Activated B cell treated with CpG ODN at 0.5 μM for 24 hours (primary cell): ENCODE measurements at regions of chr9 and their contacts with region 1.

Region 1: GRCh38 chr9:35829084-35829763 is at the start of gene TMEM8B:
- DNase-seq: peak; percentile 89
- ATAC-seq: peak; percentile 92
- H3K4me3 Mint-ChIP-seq: peak within 1 kb of the TSS; percentile 95
- H3K27ac Mint-ChIP-seq: peak within 1 kb of the TSS; percentile 86
- H3K4me1 Mint-ChIP-seq: peaks cover 34% of the 10 kb centered on the region
- H3K27me3 Mint-ChIP-seq: no peaks in the 10 kb centered on the region
- CTCF ChIP-seq: no peak
- total RNA-seq, gene TMEM8B: 5.0 and 8.0 TPM in 2 replicates

Region 2: DNA sequence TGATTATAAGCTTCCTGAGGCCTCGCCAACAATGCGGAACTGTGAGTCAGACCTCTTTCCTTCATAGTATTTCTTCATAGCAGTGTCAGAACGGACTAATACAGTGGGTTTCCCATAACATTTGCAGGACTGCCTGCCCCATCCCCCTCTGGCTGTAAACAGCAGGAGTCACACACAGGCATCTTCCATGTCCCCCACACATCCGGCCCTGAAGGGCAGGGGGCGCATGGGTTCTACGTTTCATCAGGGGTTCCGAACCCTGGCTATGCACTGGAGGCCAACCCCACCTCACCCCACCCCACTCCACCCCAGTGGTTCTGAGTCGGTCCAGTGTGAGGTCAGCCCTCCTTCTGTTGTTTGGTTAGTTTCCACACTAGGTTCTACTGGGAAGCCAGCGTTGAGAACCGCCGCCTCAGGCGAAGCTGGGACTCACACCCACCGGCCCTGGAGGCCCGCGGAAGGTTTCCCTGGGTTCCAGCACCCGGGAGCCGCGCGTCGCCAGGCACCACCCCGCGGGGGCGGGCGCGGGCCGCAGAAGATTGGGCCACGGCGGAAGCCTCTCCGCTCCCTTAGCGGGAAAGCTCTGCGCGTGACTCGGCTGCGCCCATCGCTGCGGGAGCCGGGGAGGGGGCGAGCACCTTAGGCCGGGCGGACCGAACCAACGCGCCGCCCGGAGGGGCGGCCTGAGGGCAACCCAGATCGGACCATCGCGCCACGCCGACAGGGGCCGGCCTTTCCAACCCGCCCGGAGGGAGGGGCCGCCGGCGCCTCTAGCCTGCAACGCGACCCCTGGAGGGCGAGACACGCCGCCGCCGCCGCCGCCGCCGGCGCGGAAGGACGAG is 339.7 kb before region 1 on chr9 and contains the start of gene RUSC2:
- CTCF ChIA-PET with region 1: no interaction called
- POLR2A ChIA-PET with region 1: no interaction called
- intact Hi-C with region 1: loop called (anchors 2 kb)
- DNase-seq: peak; percentile 43
- ATAC-seq: peak; percentile 86
- H3K4me3 Mint-ChIP-seq: peak within 1 kb of the TSS; percentile 82
- H3K27ac Mint-ChIP-seq: no peak within 1 kb of the TSS
- H3K4me1 Mint-ChIP-seq: peaks cover 14% of the 10 kb centered on the region
- H3K27me3 Mint-ChIP-seq: peaks cover 30% of the 10 kb centered on the region
- CTCF ChIP-seq: no peak
- total RNA-seq, gene RUSC2: 0.24 and 0.29 TPM in 2 replicates

Region 3: DNA sequence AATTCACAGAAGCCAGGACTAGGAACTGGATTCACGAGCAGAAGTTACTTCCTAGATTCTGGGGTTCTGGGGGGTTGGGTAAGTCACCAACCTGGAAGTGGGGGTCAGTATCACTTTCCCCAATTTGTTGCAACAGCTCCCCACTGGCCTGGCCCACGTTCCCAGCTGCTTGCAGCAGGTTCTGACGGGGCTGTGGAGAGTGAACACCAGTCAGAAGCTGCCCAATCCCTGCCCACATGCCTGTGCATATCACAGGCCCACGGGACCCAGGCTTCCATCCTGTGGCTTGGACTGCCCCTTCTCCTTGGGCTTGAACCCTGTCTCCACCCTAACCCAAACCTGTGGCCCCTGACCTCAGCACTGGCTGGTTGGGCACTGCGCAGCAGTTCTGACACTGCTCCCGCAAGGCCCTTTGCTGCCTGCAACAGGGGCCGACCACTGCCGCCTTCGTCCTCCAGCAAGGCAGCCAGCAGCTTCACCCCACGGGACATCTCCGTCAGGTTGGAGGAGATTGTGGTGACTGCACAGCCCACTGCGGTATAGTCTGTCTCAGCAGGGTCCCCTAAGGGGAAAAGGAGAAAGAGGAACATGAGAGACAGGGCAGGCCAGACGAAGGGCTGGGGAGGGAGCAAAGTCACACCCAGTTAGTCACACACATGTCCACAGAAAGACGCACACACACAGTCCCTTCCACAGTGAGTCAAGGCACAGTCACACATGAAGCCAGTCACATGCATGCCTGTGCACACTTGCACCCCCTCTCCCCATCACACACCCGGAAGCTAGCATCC is 110.3 kb before region 1 on chr9:
- CTCF ChIA-PET with region 1: no interaction called
- POLR2A ChIA-PET with region 1: no interaction called
- intact Hi-C with region 1: no loop called
- DNase-seq: peak; percentile 56
- ATAC-seq: peak; percentile 98
- H3K4me3 Mint-ChIP-seq: peak overlapping the region; percentile 32
- H3K27ac Mint-ChIP-seq: peak overlapping the region; percentile 85
- H3K4me1 Mint-ChIP-seq: peaks cover 26% of the 10 kb centered on the region
- H3K27me3 Mint-ChIP-seq: no peaks in the 10 kb centered on the region
- CTCF ChIP-seq: no peak

Region 4: GRCh38 chr9:35756275-35757225 is 72.7 kb before region 1 on chr9:
- CTCF ChIA-PET with region 1: interaction called, 6 read pairs
- POLR2A ChIA-PET with region 1: interaction called, 3 read pairs
- intact Hi-C with region 1: loop called (anchors 1 kb)
- DNase-seq: peak; percentile 68
- ATAC-seq: peak; percentile 73
- H3K4me3 Mint-ChIP-seq: peak overlapping the region; percentile 91
- H3K27ac Mint-ChIP-seq: peak overlapping the region; percentile 93
- H3K4me1 Mint-ChIP-seq: peaks cover 55% of the 10 kb centered on the region
- H3K27me3 Mint-ChIP-seq: no peaks in the 10 kb centered on the region
- CTCF ChIP-seq: no peak

Region 5: DNA sequence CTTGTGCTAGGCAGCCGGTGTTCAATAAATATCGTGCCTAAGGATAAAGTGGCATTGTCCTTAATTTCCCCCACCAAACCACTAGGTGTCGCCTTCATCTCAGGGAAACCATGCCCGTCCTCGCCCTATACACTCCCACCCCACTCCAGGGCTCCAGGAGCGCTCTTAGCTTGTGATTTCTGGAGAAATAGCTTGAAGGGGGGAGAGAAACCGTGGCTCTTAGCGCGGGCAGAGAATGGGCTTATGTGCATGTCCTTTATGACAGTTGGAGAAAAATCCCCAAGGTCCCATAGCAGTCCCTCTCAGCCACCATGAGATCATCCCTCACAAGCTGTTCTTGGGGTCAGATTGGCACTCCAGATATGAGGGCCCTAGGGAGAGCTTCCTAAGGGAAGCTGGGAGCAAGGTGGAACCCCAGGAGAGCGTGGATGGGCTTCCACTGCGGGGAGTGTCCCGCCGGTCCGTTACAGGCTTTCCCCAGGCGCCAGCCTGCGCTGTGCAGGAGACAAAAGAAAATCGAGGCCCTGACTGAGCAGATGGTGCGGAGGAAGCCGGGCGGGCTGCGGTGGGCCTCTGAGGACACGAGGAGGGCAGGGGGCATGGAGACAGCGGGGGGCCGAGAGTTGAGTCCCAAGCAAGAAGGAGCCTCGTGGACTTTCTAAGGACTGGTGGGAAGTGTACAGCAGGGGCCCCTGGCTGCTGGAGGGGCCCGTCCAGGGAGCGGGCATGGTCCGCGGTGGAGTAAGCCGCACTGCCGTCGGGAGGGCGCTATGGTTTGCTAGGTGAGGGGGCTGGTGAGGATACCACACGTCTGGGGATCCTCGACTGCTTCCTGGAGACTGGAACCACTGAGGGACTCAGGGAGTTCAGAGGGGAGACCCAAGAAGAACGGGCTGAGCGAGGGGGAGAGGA is 38.6 kb before region 1 on chr9:
- CTCF ChIA-PET with region 1: interaction called, 49 read pairs
- POLR2A ChIA-PET with region 1: interaction called, 3 read pairs
- intact Hi-C with region 1: loop called (anchors 1 kb)
- DNase-seq: no peak
- ATAC-seq: peak; percentile 92
- H3K4me3 Mint-ChIP-seq: peak overlapping the region; percentile 58
- H3K27ac Mint-ChIP-seq: no peak overlapping the region
- H3K4me1 Mint-ChIP-seq: peaks cover 10% of the 10 kb centered on the region
- H3K27me3 Mint-ChIP-seq: peaks cover 5% of the 10 kb centered on the region
- CTCF ChIP-seq: no peak

Region 6: DNA sequence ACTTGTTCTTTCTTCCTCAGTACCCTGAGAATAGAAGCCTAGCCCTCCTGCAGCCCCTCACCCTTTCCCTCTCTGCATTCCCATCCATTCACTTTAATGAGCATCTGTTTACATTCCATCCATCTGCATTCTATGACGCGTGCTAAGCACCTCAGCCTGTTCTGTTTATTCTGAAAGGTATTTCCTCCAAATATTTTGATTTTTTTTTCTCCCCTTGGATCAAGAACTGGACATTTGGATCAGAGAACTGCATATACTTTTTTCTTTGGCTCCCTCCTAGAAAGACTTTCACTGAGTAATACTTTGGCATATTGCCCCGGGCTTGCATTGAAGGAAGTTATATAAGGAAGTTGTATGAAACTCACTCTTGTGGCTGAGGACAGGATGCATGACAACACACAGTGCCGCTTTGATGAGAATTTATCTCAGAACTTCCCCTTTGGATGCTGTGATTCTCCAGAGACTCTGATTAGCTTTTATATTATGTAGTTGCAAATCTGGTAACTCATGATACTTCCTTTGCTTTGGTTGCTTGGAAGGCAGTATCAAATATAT is 15.6 kb after region 1 on chr9:
- CTCF ChIA-PET with region 1: interaction called, 28 read pairs
- POLR2A ChIA-PET with region 1: interaction called, 6 read pairs
- intact Hi-C with region 1: loop called (anchors 1 kb)
- DNase-seq: no peak
- ATAC-seq: peak; percentile 80
- H3K4me3 Mint-ChIP-seq: peak overlapping the region; percentile 33
- H3K27ac Mint-ChIP-seq: peak overlapping the region; percentile 28
- H3K4me1 Mint-ChIP-seq: peaks cover 81% of the 10 kb centered on the region
- H3K27me3 Mint-ChIP-seq: no peaks in the 10 kb centered on the region
- CTCF ChIP-seq: no peak

Region 7: GRCh38 chr9:35859310-35859989 is 30.2 kb after region 1 on chr9:
- CTCF ChIA-PET with region 1: interaction called, 11 read pairs
- POLR2A ChIA-PET with region 1: no interaction called
- intact Hi-C with region 1: no loop called
- DNase-seq: no peak
- ATAC-seq: peak; percentile 79
- H3K4me3 Mint-ChIP-seq: no peak overlapping the region
- H3K27ac Mint-ChIP-seq: no peak overlapping the region
- H3K4me1 Mint-ChIP-seq: peaks cover 3% of the 10 kb centered on the region
- H3K27me3 Mint-ChIP-seq: peaks cover 14% of the 10 kb centered on the region
- CTCF ChIP-seq: no peak

Region 8: DNA sequence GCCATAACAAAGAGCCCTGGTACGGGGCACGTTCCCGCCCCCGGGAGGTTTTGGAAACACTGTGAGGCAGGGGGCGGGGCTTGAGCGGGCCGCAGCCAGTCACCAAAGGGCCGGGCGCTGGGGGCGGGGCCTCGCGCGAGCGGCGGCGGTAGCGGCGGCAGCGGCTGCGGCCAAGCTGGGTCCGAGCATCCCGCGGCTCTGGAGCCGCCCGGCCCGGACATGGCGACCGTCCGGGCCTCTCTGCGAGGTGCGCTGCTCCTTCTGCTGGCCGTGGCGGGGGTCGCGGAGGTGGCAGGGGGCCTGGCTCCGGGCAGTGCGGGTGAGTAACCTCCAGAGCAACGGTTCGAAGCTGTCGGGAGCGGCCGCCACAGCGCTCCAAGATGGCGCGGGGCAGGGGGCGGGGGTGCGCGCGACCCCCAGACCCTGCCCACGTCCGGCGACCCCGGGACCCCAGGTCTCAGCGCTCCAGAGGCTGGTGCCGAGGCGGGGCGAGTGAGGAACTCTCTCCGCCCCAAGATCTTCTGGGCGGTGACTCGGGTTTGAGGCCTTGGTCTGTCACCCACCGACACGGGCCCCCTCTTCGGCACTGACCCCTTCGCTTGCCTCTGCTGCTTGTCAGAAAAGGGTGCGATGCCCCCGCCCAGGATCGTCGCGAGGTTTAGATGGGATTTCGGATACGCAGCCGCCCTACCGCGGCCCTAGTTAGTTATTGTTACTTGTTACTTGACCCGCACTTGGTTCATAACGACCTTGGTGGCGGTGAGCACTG is 207.7 kb after region 1 on chr9 and contains the start of gene RECK:
- CTCF ChIA-PET with region 1: no interaction called
- POLR2A ChIA-PET with region 1: no interaction called
- intact Hi-C with region 1: no loop called
- DNase-seq: peak; percentile 87
- ATAC-seq: peak; percentile 97
- H3K4me3 Mint-ChIP-seq: peak within 1 kb of the TSS; percentile 92
- H3K27ac Mint-ChIP-seq: no peak within 1 kb of the TSS
- H3K4me1 Mint-ChIP-seq: peaks cover 37% of the 10 kb centered on the region
- H3K27me3 Mint-ChIP-seq: peaks cover 4% of the 10 kb centered on the region
- CTCF ChIP-seq: no peak
- total RNA-seq, gene RECK: 4.2 and 5.0 TPM in 2 replicates